Panc1 (cell line): ENCODE measurements at regions of chr14 and their contacts with region 1.

Region 1: DNA sequence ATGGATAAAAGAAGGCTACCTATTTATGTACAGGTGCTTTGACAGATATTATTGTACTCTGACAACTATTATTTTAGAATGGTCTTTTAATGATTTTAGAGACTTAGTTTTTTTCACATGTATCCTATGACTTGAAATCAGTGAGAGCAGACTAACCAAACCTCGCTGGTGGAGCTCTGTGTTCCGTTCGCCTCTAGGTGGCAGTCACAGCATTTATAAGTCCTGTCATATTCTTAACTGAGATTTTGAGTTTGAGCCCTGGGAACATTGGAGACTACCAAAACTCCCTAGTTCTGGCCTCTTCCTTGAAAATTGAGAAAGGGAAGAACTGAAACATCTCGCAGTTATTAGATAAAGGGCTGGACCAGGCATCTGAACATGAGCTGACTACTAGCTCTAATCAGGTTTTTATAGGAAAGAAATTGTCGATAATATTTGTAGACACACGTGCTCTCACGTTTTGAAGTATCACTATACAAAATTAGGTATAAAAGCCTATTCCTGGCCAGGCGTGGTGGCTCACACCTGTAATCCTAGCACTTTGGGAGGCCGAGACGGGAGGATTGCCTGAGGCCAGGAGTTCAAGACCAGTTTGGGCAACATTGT is 48.3 kb downstream of the TTLL5 start:
- DNase-seq: peak; percentile 45
- ATAC-seq: peak; percentile 80
- H3K4me3 ChIP-seq: no peak overlapping the region
- H3K27ac ChIP-seq: no peak overlapping the region
- H3K4me1 ChIP-seq: peaks cover 19% of the 10 kb centered on the region
- H3K27me3 ChIP-seq: no peaks in the 10 kb centered on the region
- CTCF ChIP-seq: peak; percentile 78

Region 2: GRCh38 chr14:75267141-75267721 is 442.1 kb before region 1 on chr14:
- CTCF ChIA-PET with region 1: no interaction called
- POLR2A ChIA-PET with region 1: interaction called, 13 read pairs
- in situ Hi-C with region 1: no loop called
- intact Hi-C with region 1: no loop called
- DNase-seq: no peak
- ATAC-seq: no peak
- H3K4me3 ChIP-seq: no peak overlapping the region
- H3K27ac ChIP-seq: no peak overlapping the region
- H3K4me1 ChIP-seq: no peaks in the 10 kb centered on the region
- H3K27me3 ChIP-seq: no peaks in the 10 kb centered on the region; the same call in 1 of the 2 replicates
- CTCF ChIP-seq: no peak

Region 3: GRCh38 chr14:75757644-75758402 is 48.5 kb after region 1 on chr14:
- CTCF ChIA-PET with region 1: no interaction called
- POLR2A ChIA-PET with region 1: no interaction called
- in situ Hi-C with region 1: no loop called
- intact Hi-C with region 1: no loop called
- DNase-seq: no peak
- ATAC-seq: no peak
- H3K4me3 ChIP-seq: no peak overlapping the region
- H3K27ac ChIP-seq: no peak overlapping the region
- H3K4me1 ChIP-seq: no peaks in the 10 kb centered on the region
- H3K27me3 ChIP-seq: no peaks in the 10 kb centered on the region
- CTCF ChIP-seq: no peak

Region 4: DNA sequence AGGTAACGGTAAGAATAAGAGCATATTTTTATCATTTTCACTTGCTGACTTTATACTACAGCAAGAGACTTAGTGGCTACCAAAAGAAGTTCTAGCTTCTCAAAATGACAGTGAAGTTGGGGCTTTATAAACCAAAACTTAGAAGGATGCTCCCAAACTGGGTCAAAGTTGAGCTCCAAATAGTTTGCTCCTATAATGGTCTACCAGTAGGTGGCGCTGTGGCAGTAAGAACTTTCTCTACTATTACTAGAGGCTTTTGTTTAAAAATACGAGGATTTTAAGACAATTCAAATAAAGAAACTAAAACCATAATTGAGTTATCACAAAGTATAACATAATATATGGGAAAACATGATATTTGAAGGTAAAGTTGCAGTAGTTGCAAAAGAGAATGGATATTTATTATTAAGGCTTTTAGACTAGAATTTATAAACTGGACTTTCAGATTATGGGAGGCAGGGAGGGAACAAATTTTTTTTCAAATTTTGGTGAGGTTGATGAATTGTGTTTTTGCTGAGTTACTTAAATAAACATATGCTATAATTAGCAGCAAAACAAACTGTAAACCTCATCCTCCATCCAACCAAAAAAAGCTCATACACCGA is 197.5 kb after region 1 on chr14:
- CTCF ChIA-PET with region 1: interaction called, 4 read pairs
- POLR2A ChIA-PET with region 1: no interaction called
- in situ Hi-C with region 1: no loop called
- intact Hi-C with region 1: loop called (anchors 10 kb)
- DNase-seq: peak; percentile 18
- ATAC-seq: no peak
- H3K4me3 ChIP-seq: no peak overlapping the region
- H3K27ac ChIP-seq: no peak overlapping the region
- H3K4me1 ChIP-seq: no peaks in the 10 kb centered on the region
- H3K27me3 ChIP-seq: no peaks in the 10 kb centered on the region
- CTCF ChIP-seq: peak; percentile 76; the same call in 1 of the 2 replicates

Region 5: GRCh38 chr14:75982266-75983018 is 273.1 kb after region 1 on chr14:
- CTCF ChIA-PET with region 1: interaction called, 54 read pairs
- POLR2A ChIA-PET with region 1: no interaction called
- in situ Hi-C with region 1: no loop called
- intact Hi-C with region 1: no loop called
- DNase-seq: no peak
- ATAC-seq: peak; percentile 83
- H3K4me3 ChIP-seq: peak overlapping the region; percentile 64
- H3K27ac ChIP-seq: peak overlapping the region; percentile 31; the same call in 1 of the 2 replicates
- H3K4me1 ChIP-seq: peaks cover 19% of the 10 kb centered on the region
- H3K27me3 ChIP-seq: no peaks in the 10 kb centered on the region
- CTCF ChIP-seq: peak; percentile 79